PC-3 (cell line): ENCODE measurements at regions of chr20 and their contacts with region 1.

Region 1: DNA sequence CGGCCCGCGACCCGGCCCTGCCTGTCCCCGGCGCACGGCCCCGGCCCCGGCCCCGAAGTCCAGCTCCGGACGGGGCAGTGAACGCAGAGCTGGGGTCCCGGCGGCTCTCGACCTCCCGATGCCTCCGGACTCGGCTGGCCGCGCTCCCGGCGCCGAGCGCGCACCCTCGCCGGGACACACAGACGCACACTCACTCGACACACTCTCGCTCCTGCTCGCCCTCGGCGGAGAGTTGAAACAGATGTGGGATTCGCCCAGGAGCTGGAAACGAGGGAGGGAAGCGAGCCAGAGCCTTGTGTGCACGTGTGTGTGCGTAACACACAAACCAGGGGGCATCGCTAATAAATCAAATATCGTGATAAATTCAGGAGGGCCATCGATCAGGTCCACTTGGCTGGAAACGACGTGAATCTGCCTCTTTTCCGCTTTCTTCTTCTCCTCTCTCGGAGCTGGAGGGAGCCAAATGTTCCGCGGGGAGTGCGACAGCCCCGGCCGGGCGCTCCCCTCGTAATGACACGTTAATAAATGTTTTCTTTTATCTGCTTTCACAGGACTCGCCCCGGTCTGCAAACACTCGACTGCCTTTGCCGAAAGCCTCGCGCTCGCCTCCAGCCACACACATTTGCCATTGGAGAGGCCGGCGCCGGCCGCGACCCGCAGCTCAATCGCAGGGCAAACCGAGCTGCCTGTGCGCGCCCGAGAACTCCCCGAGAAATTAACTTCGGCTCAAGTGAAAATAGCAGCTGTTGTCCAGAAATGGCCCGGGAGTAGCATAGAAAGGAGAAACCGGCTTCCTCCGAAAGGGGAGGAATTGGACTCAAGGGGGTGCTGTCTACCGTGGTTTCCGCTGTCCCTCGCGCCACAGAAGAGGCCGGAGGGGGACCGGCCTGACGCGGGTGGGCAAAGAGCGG is 828 bp upstream of the SULF2 start:
- DNase-seq: peak; percentile 90
- ATAC-seq: peak; percentile 35
- H3K4me3 ChIP-seq: peak overlapping the region; percentile 83
- H3K27ac ChIP-seq: peak overlapping the region; percentile 87
- H3K4me1 ChIP-seq: peaks cover 66% of the 10 kb centered on the region
- H3K27me3 ChIP-seq: no peaks in the 10 kb centered on the region
- CTCF ChIP-seq: peak; percentile 96

Region 2: GRCh38 chr20:47816282-47817081 is 30.4 kb after region 1 on chr20:
- CTCF ChIA-PET with region 1: no interaction called
- POLR2A ChIA-PET with region 1: no interaction called
- intact Hi-C with region 1: loop called (anchors 1 kb)
- DNase-seq: no peak
- ATAC-seq: no peak
- H3K4me3 ChIP-seq: no peak overlapping the region
- H3K27ac ChIP-seq: peak overlapping the region; percentile 95
- H3K4me1 ChIP-seq: peaks cover 56% of the 10 kb centered on the region
- H3K27me3 ChIP-seq: no peaks in the 10 kb centered on the region
- CTCF ChIP-seq: no peak

Region 3: GRCh38 chr20:47929363-47930123 is 143.4 kb after region 1 on chr20:
- CTCF ChIA-PET with region 1: interaction called, 3 read pairs
- POLR2A ChIA-PET with region 1: no interaction called
- intact Hi-C with region 1: loop called (anchors 5 kb)
- DNase-seq: peak; percentile 92
- ATAC-seq: peak; percentile 64
- H3K4me3 ChIP-seq: no peak overlapping the region
- H3K27ac ChIP-seq: peak overlapping the region; percentile 93
- H3K4me1 ChIP-seq: peaks cover 64% of the 10 kb centered on the region
- H3K27me3 ChIP-seq: no peaks in the 10 kb centered on the region
- CTCF ChIP-seq: no peak

Region 4: GRCh38 chr20:48012197-48013085 is 226.3 kb after region 1 on chr20:
- CTCF ChIA-PET with region 1: no interaction called
- POLR2A ChIA-PET with region 1: no interaction called
- intact Hi-C with region 1: loop called (anchors 10 kb)
- DNase-seq: peak; percentile 98
- ATAC-seq: peak; percentile 88
- H3K4me3 ChIP-seq: no peak overlapping the region
- H3K27ac ChIP-seq: peak overlapping the region; percentile 84
- H3K4me1 ChIP-seq: peaks cover 34% of the 10 kb centered on the region
- H3K27me3 ChIP-seq: no peaks in the 10 kb centered on the region
- CTCF ChIP-seq: peak; percentile 84